Activated B cell treated with CpG ODN at 0.5 μM for 24 hours (primary cell): ENCODE measurements at regions of chr1 and their contacts with region 1.

Region 1: DNA sequence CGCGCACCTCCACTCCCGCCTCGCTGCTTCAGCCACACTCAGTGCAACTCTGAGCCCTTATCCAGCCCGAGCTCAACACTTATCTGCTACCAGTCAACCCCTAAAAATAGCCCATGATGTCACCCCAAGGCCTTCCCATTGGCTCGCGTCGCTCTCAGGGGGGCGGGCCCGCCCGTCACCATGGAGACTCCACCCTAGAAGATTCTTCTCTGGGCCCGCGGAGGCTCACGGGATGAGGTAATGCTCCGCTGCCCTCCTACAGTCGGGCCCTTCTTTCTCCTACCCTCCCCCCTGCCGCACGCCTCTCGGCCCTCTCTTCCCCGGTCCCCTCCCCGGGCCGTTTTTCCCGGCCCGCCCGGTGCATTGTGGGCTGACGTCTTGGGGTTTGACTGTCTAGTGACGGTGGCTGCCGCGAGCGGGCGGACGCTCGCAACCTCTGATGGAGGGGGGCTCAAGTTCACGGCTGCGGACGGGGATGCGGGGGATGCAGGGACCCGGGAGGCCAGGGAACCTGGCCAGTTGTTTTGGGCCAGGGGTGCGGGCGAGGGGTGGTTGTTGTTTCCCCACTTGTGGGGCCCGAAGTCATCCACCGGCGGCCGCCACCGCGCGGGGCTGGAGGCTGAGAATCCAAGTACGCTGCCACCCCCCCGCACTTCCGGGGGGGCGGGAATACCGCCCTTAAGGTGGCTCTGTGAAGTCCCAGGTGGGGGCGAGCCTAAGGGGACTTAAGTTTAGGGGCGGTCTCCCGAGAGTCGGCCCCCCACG is at the start of gene JUN:
- DNase-seq: peak; percentile 93
- ATAC-seq: peak; percentile 72
- H3K4me3 Mint-ChIP-seq: peak within 1 kb of the TSS; percentile 96
- H3K27ac Mint-ChIP-seq: peak within 1 kb of the TSS; percentile 99
- H3K4me1 Mint-ChIP-seq: peaks cover 38% of the 10 kb centered on the region
- H3K27me3 Mint-ChIP-seq: no peaks in the 10 kb centered on the region
- CTCF ChIP-seq: no peak
- total RNA-seq, gene JUN: 35.3 and 36.6 TPM in 2 replicates

Region 2: GRCh38 chr1:58607391-58607790 is 176.8 kb before region 1 on chr1:
- CTCF ChIA-PET with region 1: no interaction called
- POLR2A ChIA-PET with region 1: no interaction called
- intact Hi-C with region 1: no loop called
- DNase-seq: no peak
- ATAC-seq: no peak
- H3K4me3 Mint-ChIP-seq: no peak overlapping the region
- H3K27ac Mint-ChIP-seq: no peak overlapping the region
- H3K4me1 Mint-ChIP-seq: no peaks in the 10 kb centered on the region
- H3K27me3 Mint-ChIP-seq: peaks cover 16% of the 10 kb centered on the region
- CTCF ChIP-seq: no peak

Region 3: GRCh38 chr1:58739856-58740466 is 44.2 kb before region 1 on chr1:
- CTCF ChIA-PET with region 1: interaction called, 3 read pairs
- POLR2A ChIA-PET with region 1: interaction called, 3 read pairs
- intact Hi-C with region 1: loop called (anchors 1 kb)
- DNase-seq: no peak
- ATAC-seq: peak; percentile 54
- H3K4me3 Mint-ChIP-seq: no peak overlapping the region
- H3K27ac Mint-ChIP-seq: no peak overlapping the region
- H3K4me1 Mint-ChIP-seq: no peaks in the 10 kb centered on the region
- H3K27me3 Mint-ChIP-seq: no peaks in the 10 kb centered on the region
- CTCF ChIP-seq: peak; percentile 87

Region 4: DNA sequence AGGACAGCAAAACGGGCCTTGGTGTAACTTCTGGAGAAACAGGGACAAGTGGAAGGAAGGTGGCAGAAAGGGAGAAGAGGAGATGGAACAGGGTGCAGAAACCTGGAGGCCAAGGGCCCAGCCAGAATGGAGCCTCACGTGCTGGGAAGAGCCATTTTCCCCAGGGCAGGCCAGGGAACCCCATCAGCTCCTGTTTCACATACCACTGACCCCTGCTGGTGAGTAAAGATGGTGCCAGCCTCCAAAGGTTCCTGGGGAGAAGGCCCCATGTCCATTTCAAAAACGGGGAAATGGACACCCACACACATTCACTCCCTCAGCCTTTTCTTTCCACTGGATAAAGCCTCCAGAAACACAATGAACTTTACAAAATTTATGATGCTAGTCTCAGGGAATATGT is 57.3 kb after region 1 on chr1:
- CTCF ChIA-PET with region 1: no interaction called
- POLR2A ChIA-PET with region 1: interaction called, 7 read pairs
- intact Hi-C with region 1: loop called (anchors 1 kb)
- DNase-seq: no peak
- ATAC-seq: no peak
- H3K4me3 Mint-ChIP-seq: no peak overlapping the region
- H3K27ac Mint-ChIP-seq: no peak overlapping the region
- H3K4me1 Mint-ChIP-seq: no peaks in the 10 kb centered on the region
- H3K27me3 Mint-ChIP-seq: no peaks in the 10 kb centered on the region
- CTCF ChIP-seq: no peak

Region 5: DNA sequence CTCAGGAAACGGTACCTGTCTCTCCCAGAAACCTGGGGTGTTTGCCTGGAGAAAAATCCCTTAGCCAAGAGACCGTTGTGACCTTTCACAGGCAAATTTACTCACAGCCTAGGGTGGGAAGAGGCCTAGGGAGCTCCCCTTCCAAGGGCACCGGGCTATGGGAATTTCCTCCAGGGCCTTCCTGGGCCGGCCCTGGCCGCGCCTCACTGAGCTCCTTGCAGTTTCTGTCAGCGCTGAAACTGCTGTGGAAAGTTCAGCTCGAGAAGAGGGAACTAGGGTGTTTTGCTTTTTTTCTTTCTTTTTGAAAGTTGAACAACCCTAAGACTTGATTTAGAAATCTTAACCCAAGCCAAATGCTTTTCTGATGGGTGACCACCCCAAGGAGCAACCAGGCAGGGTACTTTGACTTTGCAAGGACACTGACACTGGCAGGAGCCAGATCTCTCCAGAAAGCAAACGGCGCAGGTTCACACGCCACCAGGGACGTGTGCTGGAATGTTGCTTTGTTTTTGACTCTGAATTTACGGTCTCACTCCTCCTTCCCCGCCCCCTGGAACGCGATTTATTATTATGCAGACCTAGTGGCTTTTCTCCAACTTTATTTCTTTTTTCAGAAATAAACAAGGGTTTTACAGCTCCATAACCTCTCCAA is 229.2 kb after region 1 on chr1:
- CTCF ChIA-PET with region 1: no interaction called
- POLR2A ChIA-PET with region 1: interaction called, 41 read pairs
- intact Hi-C with region 1: loop called (anchors 1 kb)
- DNase-seq: peak; percentile 45
- ATAC-seq: peak; percentile 72
- H3K4me3 Mint-ChIP-seq: peak overlapping the region; percentile 73
- H3K27ac Mint-ChIP-seq: peak overlapping the region; percentile 91
- H3K4me1 Mint-ChIP-seq: peaks cover 76% of the 10 kb centered on the region
- H3K27me3 Mint-ChIP-seq: no peaks in the 10 kb centered on the region
- CTCF ChIP-seq: no peak

Region 6: DNA sequence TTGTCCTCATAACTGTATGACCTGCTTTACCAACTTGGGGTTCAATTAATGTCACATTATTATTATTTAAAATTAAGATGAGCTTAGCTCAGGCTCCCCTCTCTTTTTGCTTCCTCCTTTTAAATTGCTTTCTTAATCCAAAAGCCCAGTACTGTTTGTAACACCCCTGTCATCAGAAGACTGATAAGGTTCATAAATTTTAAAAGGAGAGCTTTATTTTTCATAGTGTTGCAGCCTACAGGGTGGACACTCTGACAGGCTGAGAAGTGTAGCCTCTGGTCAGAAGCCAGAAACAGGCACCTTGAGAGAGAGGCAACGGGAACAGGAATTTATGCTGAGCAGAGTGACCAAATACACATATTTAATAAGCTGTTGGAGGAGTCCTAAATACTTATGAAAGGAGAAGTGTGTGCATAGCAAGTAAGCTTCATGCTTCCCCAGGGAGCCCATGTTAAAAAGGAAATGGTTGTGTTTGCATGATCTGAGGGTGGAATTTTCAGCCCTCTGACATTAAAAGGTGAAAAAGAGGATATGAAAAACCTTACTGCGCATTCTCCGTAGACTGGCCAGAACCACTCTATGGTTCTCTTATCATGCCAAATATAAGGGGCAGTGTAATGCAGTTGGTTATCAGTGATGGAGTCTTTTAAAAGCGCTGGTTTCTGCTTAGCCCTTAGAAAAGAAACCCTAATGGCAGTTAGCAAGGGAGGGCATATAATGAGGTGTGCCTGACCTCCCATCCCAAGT is 482.2 kb after region 1 on chr1:
- CTCF ChIA-PET with region 1: no interaction called
- POLR2A ChIA-PET with region 1: interaction called, 44 read pairs
- intact Hi-C with region 1: loop called (anchors 1 kb)
- DNase-seq: peak; percentile 21
- ATAC-seq: peak; percentile 92
- H3K4me3 Mint-ChIP-seq: peak overlapping the region; percentile 75
- H3K27ac Mint-ChIP-seq: peak overlapping the region; percentile 97
- H3K4me1 Mint-ChIP-seq: peaks cover 63% of the 10 kb centered on the region
- H3K27me3 Mint-ChIP-seq: no peaks in the 10 kb centered on the region
- CTCF ChIP-seq: no peak

Region 7: GRCh38 chr1:59560807-59561450 is 776.8 kb after region 1 on chr1:
- CTCF ChIA-PET with region 1: no interaction called
- POLR2A ChIA-PET with region 1: interaction called, 10 read pairs
- intact Hi-C with region 1: no loop called
- DNase-seq: no peak
- ATAC-seq: peak; percentile 93
- H3K4me3 Mint-ChIP-seq: peak overlapping the region; percentile 42
- H3K27ac Mint-ChIP-seq: peak overlapping the region; percentile 80
- H3K4me1 Mint-ChIP-seq: peaks cover 44% of the 10 kb centered on the region
- H3K27me3 Mint-ChIP-seq: no peaks in the 10 kb centered on the region
- CTCF ChIP-seq: no peak